Caco-2 (cell line): ENCODE measurements at regions of chr12 and their contacts with region 1.

Region 1: DNA sequence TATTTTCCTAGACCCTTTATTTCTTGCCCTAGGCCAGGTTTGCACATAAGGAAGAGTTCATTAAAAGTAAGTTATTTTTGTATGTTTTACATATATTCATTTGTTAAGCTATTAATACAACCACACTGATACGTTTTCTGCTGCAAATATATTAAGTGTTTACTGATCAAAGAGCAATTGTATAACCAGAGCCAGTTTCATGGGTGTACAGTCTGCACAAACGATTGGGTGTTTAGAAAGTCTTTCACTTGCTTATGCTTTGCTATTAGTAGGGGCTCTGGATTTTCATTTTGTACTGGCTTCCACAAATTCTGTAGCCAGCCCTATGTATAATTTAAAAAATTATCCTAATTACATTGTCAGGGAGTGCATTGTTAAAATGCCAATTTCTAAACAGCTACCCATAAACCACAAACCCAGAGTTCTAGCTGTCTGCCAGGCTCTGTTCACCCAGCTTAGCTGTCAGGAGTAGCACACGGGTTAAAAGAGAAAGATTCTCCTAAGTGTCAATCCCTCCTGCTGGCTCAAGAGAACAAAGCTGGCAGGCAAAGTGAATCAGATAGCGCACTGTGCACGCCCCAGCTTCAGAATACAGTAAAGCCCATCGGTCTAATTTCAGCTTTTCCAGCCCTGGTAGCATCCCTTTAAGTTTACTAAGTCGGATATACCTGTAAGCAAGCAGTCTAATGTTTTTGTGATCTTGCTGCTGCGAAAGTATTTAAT is 151.0 kb upstream of the LMO3 start:
- DNase-seq: no peak
- H3K4me3 ChIP-seq: no peak overlapping the region
- H3K4me3 Mint-ChIP-seq: no peak overlapping the region
- H3K27ac Mint-ChIP-seq: no peak overlapping the region
- H3K4me1 ChIP-seq: no peaks in the 10 kb centered on the region
- H3K4me1 Mint-ChIP-seq: peaks cover 2% of the 10 kb centered on the region
- H3K27me3 ChIP-seq: no peaks in the 10 kb centered on the region
- H3K27me3 Mint-ChIP-seq: peaks cover 4% of the 10 kb centered on the region
- CTCF ChIP-seq: no peak

Region 2: DNA sequence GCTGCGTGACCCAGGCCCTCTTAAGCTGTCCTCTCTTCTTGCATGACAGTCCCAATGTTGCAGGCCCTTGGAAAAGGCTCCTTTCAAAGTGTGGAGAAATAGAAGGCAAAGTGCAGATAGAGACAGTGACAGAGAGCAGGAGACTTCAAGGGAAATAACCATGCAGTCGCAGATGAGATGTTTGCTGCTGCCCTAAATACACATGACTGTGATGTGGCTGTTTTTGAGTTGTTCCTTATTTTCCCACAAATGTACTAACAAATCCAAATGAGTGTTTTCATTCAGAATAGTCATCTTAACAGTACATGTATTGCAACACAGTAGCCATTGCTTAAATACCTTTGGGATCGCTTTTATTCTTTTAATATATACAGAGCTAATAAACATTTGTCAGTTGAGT is 581.2 kb before region 1 on chr12:
- CTCF ChIA-PET with region 1: interaction called, 14 read pairs
- POLR2A ChIA-PET with region 1: no interaction called
- intact Hi-C with region 1: no loop called
- DNase-seq: no peak
- H3K4me3 ChIP-seq: no peak overlapping the region
- H3K4me3 Mint-ChIP-seq: no peak overlapping the region
- H3K27ac Mint-ChIP-seq: no peak overlapping the region
- H3K4me1 ChIP-seq: no peaks in the 10 kb centered on the region
- H3K4me1 Mint-ChIP-seq: no peaks in the 10 kb centered on the region
- H3K27me3 ChIP-seq: no peaks in the 10 kb centered on the region
- H3K27me3 Mint-ChIP-seq: no peaks in the 10 kb centered on the region
- CTCF ChIP-seq: no peak

Region 3: GRCh38 chr12:16789204-16789790 is 32.3 kb after region 1 on chr12:
- CTCF ChIA-PET with region 1: no interaction called
- POLR2A ChIA-PET with region 1: no interaction called
- intact Hi-C with region 1: no loop called
- DNase-seq: no peak
- H3K4me3 ChIP-seq: no peak overlapping the region
- H3K4me3 Mint-ChIP-seq: no peak overlapping the region
- H3K27ac Mint-ChIP-seq: no peak overlapping the region
- H3K4me1 ChIP-seq: no peaks in the 10 kb centered on the region
- H3K4me1 Mint-ChIP-seq: no peaks in the 10 kb centered on the region
- H3K27me3 ChIP-seq: no peaks in the 10 kb centered on the region
- H3K27me3 Mint-ChIP-seq: peaks cover 7% of the 10 kb centered on the region
- CTCF ChIP-seq: no peak